SK-N-SH (cell line): ENCODE measurements at regions of chr22 and their contacts with region 1.

Region 1: DNA sequence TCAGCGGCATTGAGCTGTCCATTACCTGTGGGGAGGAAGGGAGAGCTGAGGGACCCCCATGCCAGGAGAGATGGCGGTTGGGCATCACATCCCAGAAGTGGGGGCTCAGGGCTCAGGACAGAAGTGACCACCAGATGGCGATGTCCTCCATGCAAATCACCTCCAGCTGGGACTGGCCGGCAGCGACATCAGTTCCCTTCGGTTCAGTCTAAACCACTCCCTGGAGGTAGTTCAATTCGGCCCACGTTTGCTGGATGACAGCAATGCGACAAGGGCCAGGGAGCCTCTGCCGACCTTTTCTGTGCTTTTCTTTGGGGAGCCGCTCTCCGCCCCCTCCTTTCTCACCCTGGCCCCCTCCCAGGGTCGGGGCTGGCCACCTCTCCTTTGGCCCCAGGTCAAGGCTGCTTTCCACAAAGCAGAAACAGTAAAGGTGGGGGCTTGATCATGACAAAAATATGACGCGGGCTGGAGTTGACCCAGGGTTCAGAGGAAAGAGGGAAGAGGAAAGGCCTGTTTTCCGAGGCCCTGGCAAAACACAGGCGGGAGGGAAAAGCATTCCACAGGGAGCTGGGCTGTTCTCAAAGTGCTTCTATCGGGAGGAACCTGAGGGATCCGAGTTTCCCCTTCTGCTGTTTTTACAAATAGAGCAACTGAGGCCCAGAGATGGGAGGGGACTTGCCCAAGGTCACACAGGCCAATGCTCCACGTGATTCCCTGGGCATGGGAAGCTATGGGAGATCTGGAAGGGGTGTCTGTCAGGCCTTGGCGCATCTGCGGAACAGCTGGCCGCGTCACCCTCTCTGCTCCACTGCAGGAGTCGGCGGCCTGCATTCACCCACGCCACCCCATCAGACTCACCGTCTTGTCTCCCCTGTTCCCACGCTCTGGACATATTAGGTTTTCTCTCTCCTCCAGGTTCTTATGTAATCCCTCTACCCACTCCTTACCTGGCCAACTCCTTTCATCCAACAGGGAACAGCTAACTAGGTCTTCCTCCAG is 54.7 kb downstream of the FBXO7 start:
- DNase-seq: peak; percentile 90
- H3K4me3 ChIP-seq: no peak overlapping the region
- H3K27ac ChIP-seq: no peak overlapping the region
- H3K4me1 ChIP-seq: peaks cover 10 to 14% of the 10 kb centered on the region in 2 experiments; a peak in 3 of 4 replicates
- H3K27me3 ChIP-seq: no peaks in the 10 kb centered on the region
- CTCF ChIP-seq: peak; percentile 86
- EP300 ChIP-seq: no peak
- RAD21 ChIP-seq: peak; percentile 97

Region 2: DNA sequence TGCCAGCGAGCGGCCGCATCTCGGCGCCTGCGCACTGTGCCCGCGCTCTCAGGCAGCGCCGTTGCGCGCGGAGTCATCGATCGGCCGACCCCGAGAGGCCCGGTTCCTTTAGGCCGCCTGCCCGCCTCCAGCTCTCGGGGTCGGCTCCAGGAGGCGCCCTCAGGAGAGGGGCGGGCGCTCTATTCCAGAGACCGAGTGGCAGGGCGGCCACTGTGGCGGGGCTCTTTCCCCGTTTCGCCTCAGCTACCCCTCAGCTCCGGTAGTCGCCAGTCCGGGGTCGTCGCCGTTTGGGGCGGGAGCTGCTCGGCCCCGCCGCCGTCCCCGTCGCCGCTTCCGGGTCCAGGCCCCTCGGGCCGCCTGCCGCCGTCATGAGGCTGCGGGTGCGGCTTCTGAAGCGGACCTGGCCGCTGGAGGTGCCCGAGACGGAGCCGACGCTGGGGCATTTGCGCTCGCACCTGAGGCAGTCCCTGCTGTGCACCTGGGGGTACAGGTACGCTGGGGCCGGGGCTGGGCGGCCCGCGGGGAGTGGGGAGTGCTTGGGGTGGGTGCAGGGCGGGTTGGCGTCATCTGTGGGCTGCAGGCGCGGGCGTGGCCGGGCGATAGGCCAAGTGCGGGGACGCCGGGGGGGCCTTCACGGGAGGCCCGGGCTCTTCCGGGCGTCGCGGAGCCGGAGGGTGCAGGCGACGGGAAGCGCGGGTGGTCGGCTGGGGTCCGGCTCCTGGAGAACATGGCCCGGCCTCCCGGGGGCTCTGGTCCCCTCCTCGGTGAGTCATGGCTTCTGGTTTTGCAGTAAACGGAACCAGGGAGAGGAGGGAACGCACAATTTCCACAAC is 54.4 kb before region 1 on chr22 and contains the start of gene FBXO7:
- CTCF ChIA-PET with region 1: interaction called, 13 read pairs
- POLR2A ChIA-PET with region 1: no interaction called
- DNase-seq: peak; percentile 94
- H3K4me3 ChIP-seq: peak within 1 kb of the TSS; percentile 71 to 86
- H3K27ac ChIP-seq: peak within 1 kb of the TSS; percentile 93 to 95
- H3K4me1 ChIP-seq: peaks cover 12 to 23% of the 10 kb centered on the region in 2 experiments; a peak in 3 of 4 replicates
- H3K27me3 ChIP-seq: no peaks in the 10 kb centered on the region
- CTCF ChIP-seq: peak; percentile 49
- EP300 ChIP-seq: no peak
- RAD21 ChIP-seq: no peak
- polyA plus RNA-seq, gene FBXO7: 77.3 and 89.1 TPM in 2 replicates

Region 3: GRCh38 chr22:32539631-32540421 is 10.5 kb after region 1 on chr22:
- CTCF ChIA-PET with region 1: interaction called, 14 read pairs
- POLR2A ChIA-PET with region 1: interaction called, 3 read pairs
- DNase-seq: no peak
- H3K4me3 ChIP-seq: no peak overlapping the region
- H3K27ac ChIP-seq: no peak overlapping the region
- H3K4me1 ChIP-seq: no peaks in the 10 kb centered on the region
- H3K27me3 ChIP-seq: no peaks in the 10 kb centered on the region; the same call in 1 of the 2 replicates
- CTCF ChIP-seq: no peak
- EP300 ChIP-seq: no peak
- RAD21 ChIP-seq: no peak

Region 4: GRCh38 chr22:32660292-32660691 is 131.0 kb after region 1 on chr22:
- CTCF ChIA-PET with region 1: interaction called, 71 read pairs
- POLR2A ChIA-PET with region 1: no interaction called
- DNase-seq: peak; percentile 81
- H3K4me3 ChIP-seq: no peak overlapping the region
- H3K27ac ChIP-seq: no peak overlapping the region; a peak in 1 of 4 replicates
- H3K4me1 ChIP-seq: peaks cover 4 to 8% of the 10 kb centered on the region in 2 experiments; a peak in 1 of 4 replicates
- H3K27me3 ChIP-seq: no peaks in the 10 kb centered on the region
- CTCF ChIP-seq: peak; percentile 70
- EP300 ChIP-seq: no peak
- RAD21 ChIP-seq: peak; percentile 84

Region 5: GRCh38 chr22:32830473-32830872 is 301.2 kb after region 1 on chr22:
- CTCF ChIA-PET with region 1: interaction called, 14 read pairs
- POLR2A ChIA-PET with region 1: no interaction called
- DNase-seq: no peak
- H3K4me3 ChIP-seq: no peak overlapping the region
- H3K27ac ChIP-seq: no peak overlapping the region
- H3K4me1 ChIP-seq: peaks cover 0 to 6% of the 10 kb centered on the region in 2 experiments; a peak in 1 of 4 replicates
- H3K27me3 ChIP-seq: no peaks in the 10 kb centered on the region
- CTCF ChIP-seq: no peak
- EP300 ChIP-seq: no peak
- RAD21 ChIP-seq: no peak

Region 6: DNA sequence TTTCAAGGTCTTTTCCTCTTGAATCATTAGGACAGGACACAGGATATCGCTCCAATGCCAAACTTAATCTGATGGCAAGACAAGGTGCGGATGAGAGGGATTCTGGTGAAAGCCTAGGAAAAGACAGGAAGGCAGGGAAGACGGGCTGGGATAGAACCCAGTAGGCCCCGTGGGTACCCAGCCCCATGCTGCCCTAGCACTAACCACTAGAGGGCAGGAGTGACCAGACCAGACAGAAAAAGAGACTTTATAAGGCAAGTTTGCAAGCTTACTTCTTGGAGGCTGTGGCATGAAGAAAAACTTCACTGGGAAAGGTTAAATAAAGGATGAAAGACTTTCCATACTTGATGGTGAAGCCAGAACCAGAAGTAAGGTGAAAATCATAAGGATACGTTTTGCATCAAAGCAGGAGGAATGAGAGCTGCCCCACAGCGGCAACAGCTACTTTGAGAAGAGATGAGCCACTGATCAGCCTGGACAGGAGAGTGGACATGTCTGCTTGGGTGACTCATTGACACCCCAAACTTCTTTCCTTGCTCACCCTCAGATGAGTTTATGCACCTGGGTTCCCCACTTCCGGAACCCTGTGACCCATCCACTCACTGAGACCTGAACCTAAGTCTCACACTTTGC is 489.1 kb after region 1 on chr22:
- CTCF ChIA-PET with region 1: interaction called, 17 read pairs
- POLR2A ChIA-PET with region 1: no interaction called
- DNase-seq: peak; percentile 80
- H3K4me3 ChIP-seq: no peak overlapping the region; a peak in 1 of 4 replicates
- H3K27ac ChIP-seq: no peak overlapping the region
- H3K4me1 ChIP-seq: no peaks in the 10 kb centered on the region
- H3K27me3 ChIP-seq: no peaks in the 10 kb centered on the region
- CTCF ChIP-seq: peak; percentile 83
- EP300 ChIP-seq: no peak
- RAD21 ChIP-seq: peak; percentile 87

Region 7: DNA sequence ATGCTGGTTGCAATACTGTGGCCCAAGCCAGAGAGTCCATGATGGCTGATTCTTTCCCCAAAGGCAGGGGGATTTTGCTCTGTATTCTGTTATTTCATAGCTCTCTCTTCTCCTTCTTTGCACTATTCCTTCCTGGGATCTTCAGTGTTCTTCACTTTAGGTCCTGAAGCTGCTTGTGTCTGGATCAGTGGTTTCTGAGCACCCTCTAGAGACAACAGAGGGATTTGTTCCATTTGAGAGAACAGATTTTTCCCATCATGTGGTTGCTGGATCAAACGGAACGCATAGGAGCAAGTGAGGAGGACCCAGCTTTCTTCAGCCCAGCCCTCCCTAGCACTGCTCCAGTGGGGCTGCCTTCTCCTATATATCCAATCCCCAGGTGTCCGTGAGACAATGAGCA is 597.6 kb after region 1 on chr22:
- CTCF ChIA-PET with region 1: interaction called, 18 read pairs
- POLR2A ChIA-PET with region 1: no interaction called
- DNase-seq: peak; percentile 52
- H3K4me3 ChIP-seq: no peak overlapping the region
- H3K27ac ChIP-seq: no peak overlapping the region
- H3K4me1 ChIP-seq: no peaks in the 10 kb centered on the region
- H3K27me3 ChIP-seq: no peaks in the 10 kb centered on the region
- CTCF ChIP-seq: no peak
- EP300 ChIP-seq: no peak
- RAD21 ChIP-seq: peak; percentile 85